ENCODE measurements at regions of chr10 and their contacts with region 1.

Region 1: DNA sequence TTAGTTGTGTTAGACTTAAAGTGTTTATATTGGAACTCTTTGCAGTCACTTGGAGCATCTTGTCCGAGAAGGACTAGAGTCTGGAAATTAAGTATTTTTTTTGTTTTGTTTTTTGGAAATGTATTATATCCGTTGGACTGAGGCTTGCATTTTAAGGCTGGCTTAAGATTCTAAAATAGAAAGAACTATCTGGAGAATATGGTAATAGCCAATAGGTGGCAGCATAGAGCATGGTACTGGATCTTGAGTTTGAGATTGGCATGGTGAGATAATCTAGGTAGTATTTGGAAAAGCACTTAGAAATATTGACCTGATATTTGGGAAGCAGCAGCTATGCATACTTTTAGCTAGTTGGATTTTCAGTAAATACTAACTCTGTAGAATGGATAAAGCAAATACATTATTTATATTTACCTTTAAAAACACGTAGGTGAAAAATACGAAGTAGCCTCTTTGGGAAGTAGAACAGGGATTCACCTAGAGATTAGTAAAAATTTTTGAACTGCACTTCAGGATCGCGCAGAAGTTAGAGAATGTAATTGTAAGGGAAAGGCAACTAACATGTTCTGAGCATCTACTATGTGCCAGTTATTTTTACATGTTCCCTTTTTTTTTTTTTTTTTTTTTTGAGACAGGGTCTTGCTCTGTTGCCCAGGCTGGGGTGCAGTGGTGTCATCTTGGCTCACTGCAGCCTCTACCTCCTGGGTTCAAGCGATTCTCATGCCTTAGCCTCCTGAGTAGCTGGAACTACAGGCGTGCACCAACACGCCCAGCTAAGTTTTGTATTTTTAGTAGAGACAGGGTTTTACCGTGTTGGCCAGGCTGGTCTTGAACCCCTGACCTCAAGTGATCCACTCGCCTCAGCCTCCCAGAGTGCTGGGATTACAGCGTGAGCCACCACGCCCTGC is 78.6 kb downstream of the LCOR start:
- DNase-seq: no peak
- H3K4me3 ChIP-seq: no peak overlapping the region
- H3K27ac ChIP-seq: no peak overlapping the region
- H3K27me3 ChIP-seq: no peaks in the 10 kb centered on the region
- CTCF ChIP-seq: peak; percentile 61

Region 2: GRCh38 chr10:96930469-96930868 is 19.7 kb after region 1 on chr10:
- CTCF ChIA-PET with region 1: interaction called, 10 read pairs
- POLR2A ChIA-PET with region 1: no interaction called
- DNase-seq: no peak
- H3K4me3 ChIP-seq: no peak overlapping the region
- H3K27ac ChIP-seq: no peak overlapping the region
- H3K27me3 ChIP-seq: no peaks in the 10 kb centered on the region
- CTCF ChIP-seq: no peak

Region 3: GRCh38 chr10:98599032-98599610 is 1688.4 kb after region 1 on chr10:
- CTCF ChIA-PET with region 1: no interaction called
- POLR2A ChIA-PET with region 1: no interaction called
- DNase-seq: no peak
- H3K4me3 ChIP-seq: no peak overlapping the region
- H3K27ac ChIP-seq: no peak overlapping the region
- H3K27me3 ChIP-seq: no peaks in the 10 kb centered on the region
- CTCF ChIP-seq: no peak